CD4-positive, alpha-beta T cell (primary cell): ENCODE measurements at regions of chr4 and their contacts with region 1.

Region 1: GRCh38 chr4:26522478-26522877 is 32.2 kb upstream of the CCKAR start:
- DNase-seq: no peak
- ATAC-seq: no peak
- H3K4me3 ChIP-seq: no peak overlapping the region
- H3K4me3 Mint-ChIP-seq: no peak overlapping the region
- H3K27ac ChIP-seq: no peak overlapping the region
- H3K27ac Mint-ChIP-seq: no peak overlapping the region
- H3K4me1 ChIP-seq: no peaks in the 10 kb centered on the region
- H3K4me1 Mint-ChIP-seq: no peaks in the 10 kb centered on the region
- H3K27me3 ChIP-seq: peaks cover 0 to 6% of the 10 kb centered on the region in 2 experiments
- H3K27me3 Mint-ChIP-seq: peaks cover 5% of the 10 kb centered on the region
- CTCF ChIP-seq: no peak

Region 2: DNA sequence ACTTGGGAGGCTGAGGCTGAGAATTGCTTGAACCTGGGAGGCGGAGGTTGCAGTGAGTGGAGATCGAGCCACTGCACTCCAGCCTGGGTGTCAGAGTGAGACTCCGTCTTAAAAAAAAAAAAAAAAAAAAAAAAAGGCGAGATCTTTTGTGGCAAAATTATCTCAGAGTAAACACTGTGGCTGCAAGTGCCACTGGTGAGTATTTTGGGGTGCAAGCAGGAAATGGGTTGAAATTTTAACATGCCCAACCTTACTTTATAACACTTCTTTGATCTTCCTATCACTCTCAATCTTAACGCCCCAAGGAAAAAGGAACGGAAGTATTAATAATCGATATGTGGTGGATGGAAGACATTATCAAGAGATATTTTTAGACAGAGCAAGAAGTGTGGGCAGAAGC is 834.7 kb before region 1 on chr4:
- CTCF ChIA-PET with region 1: no interaction called
- POLR2A ChIA-PET with region 1: no interaction called
- intact Hi-C with region 1: no loop called
- DNase-seq: peak in 1 of 14 experiments; percentile 56
- ATAC-seq: no peak
- H3K4me3 ChIP-seq: no peak overlapping the region
- H3K4me3 Mint-ChIP-seq: no peak overlapping the region
- H3K27ac ChIP-seq: no peak overlapping the region
- H3K27ac Mint-ChIP-seq: no peak overlapping the region
- H3K4me1 ChIP-seq: no peaks in the 10 kb centered on the region
- H3K4me1 Mint-ChIP-seq: no peaks in the 10 kb centered on the region
- H3K27me3 ChIP-seq: peaks cover 0 to 2% of the 10 kb centered on the region in 2 experiments
- H3K27me3 Mint-ChIP-seq: no peaks in the 10 kb centered on the region
- CTCF ChIP-seq: no peak

Region 3: GRCh38 chr4:26533685-26534084 is 11.2 kb after region 1 on chr4:
- CTCF ChIA-PET with region 1: no interaction called
- POLR2A ChIA-PET with region 1: no interaction called
- intact Hi-C with region 1: loop called in 1 of 2 experiments (anchors 1 kb)
- DNase-seq: no peak
- ATAC-seq: no peak
- H3K4me3 ChIP-seq: no peak overlapping the region
- H3K4me3 Mint-ChIP-seq: no peak overlapping the region
- H3K27ac ChIP-seq: no peak overlapping the region
- H3K27ac Mint-ChIP-seq: no peak overlapping the region
- H3K4me1 ChIP-seq: no peaks in the 10 kb centered on the region
- H3K4me1 Mint-ChIP-seq: no peaks in the 10 kb centered on the region
- H3K27me3 ChIP-seq: no peaks in the 10 kb centered on the region
- H3K27me3 Mint-ChIP-seq: no peaks in the 10 kb centered on the region
- CTCF ChIP-seq: no peak